Naive thymus-derived CD4-positive, alpha-beta T cell (primary cell): ENCODE measurements at regions of chr22 and their contacts with region 1.

Region 1: GRCh38 chr22:28810821-28811491 is 10.6 kb upstream of the XBP1 start:
- DNase-seq: peak in 7 of 9 donors; percentile 26 to 67 (median 55)
- ATAC-seq: peak; percentile 58
- H3K4me3 ChIP-seq: peak overlapping the region; percentile 54
- H3K4me3 Mint-ChIP-seq: peak overlapping the region; percentile 78 to 91 (median 86)
- H3K27ac ChIP-seq: peak overlapping the region; percentile 62
- H3K27ac Mint-ChIP-seq: peak overlapping the region; percentile 91 to 96 (median 94)
- H3K4me1 ChIP-seq: peaks cover 42 to 58% of the 10 kb centered on the region in 2 donors
- H3K4me1 Mint-ChIP-seq: peaks cover 62 to 89% (median 75%) of the 10 kb centered on the region in 7 donors
- H3K27me3 ChIP-seq: no peaks in the 10 kb centered on the region
- H3K27me3 Mint-ChIP-seq: no peaks in the 10 kb centered on the region

Region 2: GRCh38 chr22:28674121-28674563 is 136.8 kb before region 1 on chr22:
- CTCF ChIA-PET with region 1: no interaction called
- POLR2A ChIA-PET with region 1: interaction called, 3 read pairs
- intact Hi-C with region 1: loop called (anchors 5 to 10 kb)
- DNase-seq: peak in 7 of 9 donors; percentile 57 to 75 (median 61)
- ATAC-seq: peak; percentile 91
- H3K4me3 ChIP-seq: no peak overlapping the region
- H3K4me3 Mint-ChIP-seq: peak overlapping the region in 9 of 10 donors; percentile 70 to 95 (median 78)
- H3K27ac ChIP-seq: no peak overlapping the region
- H3K27ac Mint-ChIP-seq: peak overlapping the region; percentile 88 to 100 (median 98)
- H3K4me1 ChIP-seq: peaks cover 16 to 17% of the 10 kb centered on the region in 2 donors
- H3K4me1 Mint-ChIP-seq: peaks cover 23 to 35% (median 34%) of the 10 kb centered on the region in 7 donors
- H3K27me3 ChIP-seq: peaks cover 10 to 42% of the 10 kb centered on the region in 2 donors
- H3K27me3 Mint-ChIP-seq: peaks cover 47 to 83% (median 66%) of the 10 kb centered on the region in 5 donors

Region 3: GRCh38 chr22:28772633-28773460 is 38.1 kb before region 1 on chr22 and contains the start of gene CCDC117:
- CTCF ChIA-PET with region 1: interaction called, 4 read pairs
- POLR2A ChIA-PET with region 1: interaction called, 9 read pairs
- intact Hi-C with region 1: loop called (anchors 2 to 5 kb)
- DNase-seq: peak; percentile 76 to 93 (median 88)
- ATAC-seq: peak; percentile 97
- H3K4me3 ChIP-seq: peak within 1 kb of the TSS; percentile 83
- H3K4me3 Mint-ChIP-seq: peak within 1 kb of the TSS; percentile 84 to 100 (median 97)
- H3K27ac ChIP-seq: peak within 1 kb of the TSS; percentile 91
- H3K27ac Mint-ChIP-seq: peak within 1 kb of the TSS; percentile 86 to 98 (median 91)
- H3K4me1 ChIP-seq: peaks cover 13 to 17% of the 10 kb centered on the region in 2 donors
- H3K4me1 Mint-ChIP-seq: peaks cover 17 to 46% (median 31%) of the 10 kb centered on the region in 7 donors
- H3K27me3 ChIP-seq: no peaks in the 10 kb centered on the region
- H3K27me3 Mint-ChIP-seq: peaks cover 0 to 2% (median 0%) of the 10 kb centered on the region in 5 donors
- total RNA-seq, gene CCDC117: 13.5 to 33.5 (median 21.2) TPM

Region 4: DNA sequence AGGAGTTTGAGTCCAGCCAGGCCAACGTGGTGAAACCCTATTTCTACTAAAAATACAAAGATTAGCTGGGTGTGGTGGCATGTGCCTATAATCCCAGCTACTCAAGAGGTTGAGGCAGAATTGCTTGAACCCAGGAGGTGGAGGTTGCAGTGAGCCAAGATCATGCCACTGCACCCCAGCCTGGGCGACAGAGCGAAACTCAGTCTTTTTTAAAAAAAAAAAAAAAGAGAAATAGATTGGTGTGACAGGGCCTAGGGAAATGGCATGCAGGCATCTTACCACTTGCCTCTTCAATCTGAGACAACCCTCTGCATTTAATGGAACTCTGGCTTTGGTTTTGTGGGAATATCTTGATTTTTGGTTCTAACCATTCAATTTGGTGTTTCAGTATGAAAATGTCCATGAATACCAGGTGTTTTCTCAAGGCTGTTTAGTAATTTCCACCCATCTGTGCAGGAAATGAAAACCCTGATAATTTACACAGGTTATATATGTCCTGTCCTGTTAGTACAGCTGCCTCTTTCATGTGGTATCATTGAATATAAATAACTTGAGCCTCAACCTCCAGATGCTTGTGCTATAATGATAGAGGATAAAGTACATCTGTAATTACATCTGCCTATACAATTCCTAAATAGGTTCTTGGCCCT is 19.0 kb before region 1 on chr22:
- CTCF ChIA-PET with region 1: interaction called, 4 read pairs
- POLR2A ChIA-PET with region 1: interaction called, 194 read pairs
- intact Hi-C with region 1: no loop called
- DNase-seq: no peak
- ATAC-seq: peak; percentile 23
- H3K4me3 ChIP-seq: no peak overlapping the region
- H3K4me3 Mint-ChIP-seq: peak overlapping the region in 5 of 10 donors; percentile 10 to 40 (median 34)
- H3K27ac ChIP-seq: no peak overlapping the region
- H3K27ac Mint-ChIP-seq: peak overlapping the region; percentile 12 to 97 (median 63)
- H3K4me1 ChIP-seq: peaks cover 22 to 34% of the 10 kb centered on the region in 2 donors
- H3K4me1 Mint-ChIP-seq: peaks cover 38 to 74% (median 66%) of the 10 kb centered on the region in 7 donors
- H3K27me3 ChIP-seq: no peaks in the 10 kb centered on the region
- H3K27me3 Mint-ChIP-seq: no peaks in the 10 kb centered on the region

Region 5: GRCh38 chr22:28829358-28830181 is 18.6 kb after region 1 on chr22:
- CTCF ChIA-PET with region 1: interaction called, 6 read pairs
- POLR2A ChIA-PET with region 1: interaction called, 42 read pairs
- intact Hi-C with region 1: no loop called
- DNase-seq: peak; percentile 50 to 74 (median 69)
- ATAC-seq: peak; percentile 95
- H3K4me3 ChIP-seq: no peak overlapping the region
- H3K4me3 Mint-ChIP-seq: peak overlapping the region; percentile 39 to 75 (median 59)
- H3K27ac ChIP-seq: no peak overlapping the region
- H3K27ac Mint-ChIP-seq: peak overlapping the region in 6 of 9 donors; percentile 33 to 87 (median 66)
- H3K4me1 ChIP-seq: peaks cover 6 to 7% of the 10 kb centered on the region in 2 donors
- H3K4me1 Mint-ChIP-seq: peaks cover 8 to 44% (median 27%) of the 10 kb centered on the region in 7 donors
- H3K27me3 ChIP-seq: no peaks in the 10 kb centered on the region
- H3K27me3 Mint-ChIP-seq: no peaks in the 10 kb centered on the region

Region 6: DNA sequence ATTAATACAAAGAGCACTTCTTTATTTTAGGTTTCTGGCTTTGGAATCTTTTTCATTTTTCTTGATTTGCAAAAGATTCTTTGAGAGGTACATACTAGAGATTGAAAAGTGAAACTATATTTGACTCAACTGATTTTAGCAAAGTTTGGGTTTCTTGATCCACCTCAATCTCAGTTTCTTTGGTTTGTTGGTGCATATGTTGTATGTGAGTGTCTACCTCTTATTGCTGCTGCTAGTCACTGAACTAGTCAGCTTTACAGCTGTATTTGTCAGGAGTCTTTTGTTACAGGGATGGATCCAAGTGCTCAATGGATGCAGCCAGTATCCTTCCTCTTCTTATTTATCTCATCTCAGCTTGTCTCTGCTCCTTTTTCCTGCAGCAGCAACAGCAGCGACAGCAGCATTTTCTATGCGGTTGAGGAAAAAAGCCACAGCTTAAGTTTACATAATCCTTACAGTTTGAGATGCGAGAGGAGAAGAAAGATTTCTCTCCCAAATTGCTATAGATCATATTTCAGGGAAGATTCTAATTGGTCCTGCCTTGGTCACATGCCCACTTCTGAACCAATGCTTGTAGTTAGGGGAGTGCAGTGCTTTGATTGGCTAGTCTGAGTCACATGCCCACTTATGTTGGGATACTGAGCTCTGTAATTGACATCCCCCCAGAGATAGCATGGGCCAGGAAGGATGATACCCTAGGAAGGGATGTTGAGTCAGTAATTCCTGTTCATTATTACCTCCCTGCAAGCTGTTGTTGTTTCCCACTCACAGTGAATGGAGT is 62.4 kb after region 1 on chr22:
- CTCF ChIA-PET with region 1: no interaction called
- POLR2A ChIA-PET with region 1: no interaction called
- intact Hi-C with region 1: no loop called
- DNase-seq: no peak
- ATAC-seq: no peak
- H3K4me3 ChIP-seq: no peak overlapping the region
- H3K4me3 Mint-ChIP-seq: peak overlapping the region in 1 of 10 donors; percentile 12
- H3K27ac ChIP-seq: no peak overlapping the region
- H3K27ac Mint-ChIP-seq: no peak overlapping the region
- H3K4me1 ChIP-seq: no peaks in the 10 kb centered on the region
- H3K4me1 Mint-ChIP-seq: peaks cover 0 to 7% (median 4%) of the 10 kb centered on the region in 7 donors
- H3K27me3 ChIP-seq: no peaks in the 10 kb centered on the region
- H3K27me3 Mint-ChIP-seq: peaks cover 0 to 12% (median 0%) of the 10 kb centered on the region in 5 donors